ENCODE measurements at regions of chr12 and their contacts with region 1.

Region 1: GRCh38 chr12:104358347-104359003 is 54.9 kb downstream of the EID3 start:
- DNase-seq: peak; percentile 82
- ATAC-seq: peak; percentile 97
- H3K4me3 ChIP-seq: no peak overlapping the region
- H3K4me3 Mint-ChIP-seq: no peak overlapping the region
- H3K27ac ChIP-seq: no peak overlapping the region
- H3K27ac Mint-ChIP-seq: no peak overlapping the region
- H3K4me1 ChIP-seq: no peaks in the 10 kb centered on the region
- H3K4me1 Mint-ChIP-seq: no peaks in the 10 kb centered on the region
- H3K27me3 ChIP-seq: no peaks in the 10 kb centered on the region
- H3K27me3 Mint-ChIP-seq: no peaks in the 10 kb centered on the region
- CTCF ChIP-seq: peak; percentile 76

Region 2: DNA sequence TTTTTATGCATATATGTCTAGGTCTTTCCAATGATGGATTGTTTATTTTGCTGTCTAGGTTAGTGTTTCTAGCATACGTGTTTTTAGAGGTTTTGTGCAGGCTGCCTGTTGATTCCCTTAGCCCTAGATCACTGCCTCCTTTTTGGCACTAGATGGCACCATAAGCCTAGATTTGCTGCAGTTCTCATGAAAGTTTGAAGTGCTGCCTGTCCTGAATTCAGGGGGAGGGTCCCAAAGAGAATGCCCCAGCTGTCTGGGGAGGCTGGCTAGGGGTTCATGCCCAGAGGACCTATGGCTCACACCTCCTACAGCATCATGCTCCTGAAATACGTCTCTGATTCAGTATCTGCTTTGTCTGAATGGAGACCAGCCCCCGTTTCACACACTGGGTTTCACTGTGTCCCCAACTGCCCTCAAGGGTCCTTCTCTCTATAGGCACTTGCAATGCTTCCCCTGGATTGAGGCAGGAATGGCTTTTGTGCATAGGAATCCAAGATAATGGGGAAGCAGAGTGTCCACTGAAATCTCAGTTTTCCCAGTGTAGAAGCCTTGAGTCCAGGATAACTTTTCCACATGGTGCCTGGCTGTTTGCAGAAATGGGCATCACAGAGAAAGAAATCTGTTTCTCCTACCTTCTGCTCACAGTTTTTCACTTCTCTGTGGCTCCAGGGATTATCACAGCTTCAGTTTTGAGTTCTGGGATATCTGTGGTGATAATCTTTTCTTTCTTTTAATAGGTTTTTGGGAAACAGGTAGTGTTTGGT is 157.1 kb before region 1 on chr12:
- CTCF ChIA-PET with region 1: interaction called, 20 read pairs
- POLR2A ChIA-PET with region 1: no interaction called
- intact Hi-C with region 1: loop called (anchors 1 kb)
- DNase-seq: peak; percentile 79
- ATAC-seq: peak; percentile 73
- H3K4me3 ChIP-seq: no peak overlapping the region
- H3K4me3 Mint-ChIP-seq: no peak overlapping the region
- H3K27ac ChIP-seq: no peak overlapping the region
- H3K27ac Mint-ChIP-seq: no peak overlapping the region
- H3K4me1 ChIP-seq: no peaks in the 10 kb centered on the region
- H3K4me1 Mint-ChIP-seq: peaks cover 1% of the 10 kb centered on the region
- H3K27me3 ChIP-seq: peaks cover 0 to 4% (median 1%) of the 10 kb centered on the region in 4 experiments
- H3K27me3 Mint-ChIP-seq: peaks cover 19% of the 10 kb centered on the region
- CTCF ChIP-seq: peak; percentile 89